Psoas muscle (tissue), 8 donors: ENCODE measurements at regions of chr20 and their contacts with region 1.

Region 1: GRCh38 chr20:1888796-1889463 is 6.3 kb upstream of the SIRPA start:
- DNase-seq: peak in 1 of 2 donors; percentile 63
- ATAC-seq: peak in 2 of 4 donors; percentile 19 to 25
- H3K4me3 ChIP-seq: no peak overlapping the region
- H3K27ac ChIP-seq: no peak overlapping the region
- H3K4me1 ChIP-seq: peaks cover 21% of the 10 kb centered on the region
- H3K27me3 ChIP-seq: no peaks in the 10 kb centered on the region
- CTCF ChIP-seq: no peak

Region 2: GRCh38 chr20:1820138-1821079 is 68.5 kb before region 1 on chr20:
- intact Hi-C with region 1: loop called in 1 of 2 experiments (anchors 5 kb)
- DNase-seq: no peak
- ATAC-seq: no peak
- H3K4me3 ChIP-seq: no peak overlapping the region
- H3K27ac ChIP-seq: no peak overlapping the region
- H3K4me1 ChIP-seq: peaks cover 16% of the 10 kb centered on the region
- H3K27me3 ChIP-seq: no peaks in the 10 kb centered on the region
- CTCF ChIP-seq: no peak